ENCODE measurements at regions of chrX and their contacts with region 1.

Region 1: DNA sequence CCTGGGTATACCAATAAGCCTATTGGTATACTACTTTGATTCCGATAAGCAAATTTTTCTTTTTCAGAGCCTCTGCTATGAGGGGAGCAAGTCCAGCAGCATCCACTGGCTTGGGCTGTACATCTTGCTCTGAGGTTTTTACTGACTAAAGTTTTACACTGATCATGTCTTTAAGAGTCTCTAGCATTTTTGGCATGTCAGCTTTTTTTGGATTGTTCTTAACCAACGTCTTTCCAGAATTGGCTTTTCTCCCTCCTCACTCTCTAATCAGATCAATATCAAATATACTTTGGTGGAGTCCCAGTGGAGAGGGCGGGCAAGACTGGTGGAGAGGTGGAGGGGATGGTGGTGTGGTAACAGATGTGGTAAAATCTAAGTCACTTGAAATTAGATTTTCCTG is 196.8 kb downstream of the HEPH start:
- DNase-seq: no peak
- ATAC-seq: no peak
- H3K4me3 ChIP-seq: no peak overlapping the region
- H3K27ac ChIP-seq: no peak overlapping the region
- H3K4me1 ChIP-seq: no peaks in the 10 kb centered on the region
- H3K27me3 ChIP-seq: no peaks in the 10 kb centered on the region
- CTCF ChIP-seq: no peak

Region 2: GRCh38 chrX:66437719-66438118 is 76.8 kb after region 1 on chrX:
- intact Hi-C with region 1: loop called in 1 of 3 experiments (anchors 10 kb)
- DNase-seq: peak in 1 of 6 donors; percentile 3
- ATAC-seq: no peak
- H3K4me3 ChIP-seq: no peak overlapping the region
- H3K27ac ChIP-seq: no peak overlapping the region
- H3K4me1 ChIP-seq: no peaks in the 10 kb centered on the region
- H3K27me3 ChIP-seq: peaks cover 0 to 3% (median 0%) of the 10 kb centered on the region in 4 donors
- CTCF ChIP-seq: no peak

Region 3: GRCh38 chrX:66872771-66873170 is 511.9 kb after region 1 on chrX:
- intact Hi-C with region 1: no loop called
- DNase-seq: no peak
- ATAC-seq: no peak
- H3K4me3 ChIP-seq: no peak overlapping the region
- H3K27ac ChIP-seq: no peak overlapping the region
- H3K4me1 ChIP-seq: no peaks in the 10 kb centered on the region
- H3K27me3 ChIP-seq: peaks cover 0 to 9% (median 0%) of the 10 kb centered on the region in 4 donors
- CTCF ChIP-seq: no peak

Measured in pancreas (tissue), 10 donors.